K562 (cell line): ENCODE measurements at regions of chr18 and their contacts with region 1.

Region 1: GRCh38 chr18:30271716-30272115 is 770.8 kb downstream of the DSC3 start:
- DNase-seq: no peak
- ATAC-seq: no peak
- H3K4me3 ChIP-seq: no peak overlapping the region
- H3K27ac ChIP-seq: no peak overlapping the region
- H3K4me1 ChIP-seq: no peaks in the 10 kb centered on the region
- H3K27me3 ChIP-seq: no peaks in the 10 kb centered on the region
- CTCF ChIP-seq: no peak
- EP300 ChIP-seq: no peak
- POLR2A ChIP-seq: no peak
- RAD21 ChIP-seq: no peak

Region 2: GRCh38 chr18:29874519-29875098 is 397.1 kb before region 1 on chr18:
- CTCF ChIA-PET with region 1: no interaction called
- POLR2A ChIA-PET with region 1: no interaction called
- in situ Hi-C with region 1: no loop called
- intact Hi-C with region 1: loop called (anchors 5 kb)
- DNase-seq: peak; percentile 11 to 58 (median 16)
- ATAC-seq: 0 out of 3 replicates have a peak, but pooled peaks have one; percentile 46
- H3K4me3 ChIP-seq: no peak overlapping the region
- H3K27ac ChIP-seq: no peak overlapping the region
- H3K4me1 ChIP-seq: no peaks in the 10 kb centered on the region
- H3K27me3 ChIP-seq: no peaks in the 10 kb centered on the region
- CTCF ChIP-seq: peak in 2 of 3 experiments; percentile 43 to 60; a peak in 4 of 6 replicates
- EP300 ChIP-seq: no peak
- POLR2A ChIP-seq: no peak
- RAD21 ChIP-seq: peak; percentile 66 to 71

Region 3: DNA sequence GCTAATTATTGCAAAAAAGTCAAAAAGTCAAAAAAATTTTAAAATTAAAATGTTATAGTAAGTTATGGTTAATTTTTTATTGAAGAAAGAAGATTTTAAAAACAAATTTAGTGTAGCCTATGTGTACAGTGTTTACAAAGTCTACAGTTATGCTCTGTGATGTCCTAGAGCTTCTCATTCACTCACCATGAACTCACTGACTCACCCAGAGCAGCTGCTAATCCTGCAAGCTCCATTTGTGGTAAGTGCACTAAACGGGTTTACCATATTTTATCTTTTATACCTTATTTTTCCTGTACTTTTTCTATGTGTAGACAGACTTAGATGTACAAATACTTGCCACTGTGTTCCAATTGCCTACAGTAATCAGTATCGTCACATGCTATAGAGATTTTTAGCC is 17.4 kb before region 1 on chr18:
- CTCF ChIA-PET with region 1: no interaction called
- POLR2A ChIA-PET with region 1: no interaction called
- in situ Hi-C with region 1: no loop called
- intact Hi-C with region 1: no loop called
- DNase-seq: no peak
- ATAC-seq: no peak
- H3K4me3 ChIP-seq: no peak overlapping the region
- H3K27ac ChIP-seq: no peak overlapping the region
- H3K4me1 ChIP-seq: no peaks in the 10 kb centered on the region
- H3K27me3 ChIP-seq: no peaks in the 10 kb centered on the region
- CTCF ChIP-seq: no peak
- EP300 ChIP-seq: no peak
- POLR2A ChIP-seq: no peak
- RAD21 ChIP-seq: no peak

Region 4: DNA sequence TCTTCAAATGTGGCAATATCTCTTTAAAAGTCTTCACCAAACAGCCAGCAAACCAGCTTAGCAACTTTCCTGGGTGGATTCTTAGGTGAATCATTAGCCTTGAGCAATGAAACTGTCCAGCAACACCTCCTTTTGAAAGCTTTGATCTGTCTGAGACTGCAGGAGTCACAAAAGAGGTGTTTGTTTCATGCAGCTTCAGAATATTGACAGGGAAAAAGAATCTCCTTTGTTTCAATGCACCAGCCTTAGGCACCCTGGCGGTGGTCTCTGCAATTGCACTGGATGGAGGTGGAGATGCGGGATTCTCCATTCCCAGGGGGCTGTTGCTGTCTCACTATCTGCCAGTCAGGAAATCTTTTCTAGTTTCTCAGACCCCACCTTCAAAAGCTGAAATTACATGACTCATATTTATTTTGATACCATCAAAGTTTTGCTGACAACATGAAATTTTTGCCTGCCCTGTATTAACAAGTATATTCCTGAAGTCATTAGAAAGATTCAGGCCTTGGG is 970.2 kb after region 1 on chr18:
- CTCF ChIA-PET with region 1: no interaction called
- POLR2A ChIA-PET with region 1: no interaction called
- in situ Hi-C with region 1: no loop called
- intact Hi-C with region 1: no loop called
- DNase-seq: peak; percentile 36 to 57 (median 40)
- ATAC-seq: peak; percentile 73
- H3K4me3 ChIP-seq: no peak overlapping the region
- H3K27ac ChIP-seq: no peak overlapping the region
- H3K4me1 ChIP-seq: no peaks in the 10 kb centered on the region; a peak in 1 of 5 replicates
- H3K27me3 ChIP-seq: no peaks in the 10 kb centered on the region
- CTCF ChIP-seq: peak; percentile 48 to 69 (median 54)
- EP300 ChIP-seq: no peak
- POLR2A ChIP-seq: no peak
- RAD21 ChIP-seq: peak; percentile 22 to 40; a peak in 2 of 4 replicates